ENCODE measurements at regions of chr15 and their contacts with region 1.

Region 1: GRCh38 chr15:74732846-74733245 is 7.5 kb upstream of the CYP1A1 start:
- DNase-seq: no peak
- ATAC-seq: no peak
- H3K4me3 ChIP-seq: no peak overlapping the region
- H3K27ac ChIP-seq: no peak overlapping the region
- H3K4me1 ChIP-seq: no peaks in the 10 kb centered on the region
- H3K27me3 ChIP-seq: no peaks in the 10 kb centered on the region
- CTCF ChIP-seq: no peak

Region 2: DNA sequence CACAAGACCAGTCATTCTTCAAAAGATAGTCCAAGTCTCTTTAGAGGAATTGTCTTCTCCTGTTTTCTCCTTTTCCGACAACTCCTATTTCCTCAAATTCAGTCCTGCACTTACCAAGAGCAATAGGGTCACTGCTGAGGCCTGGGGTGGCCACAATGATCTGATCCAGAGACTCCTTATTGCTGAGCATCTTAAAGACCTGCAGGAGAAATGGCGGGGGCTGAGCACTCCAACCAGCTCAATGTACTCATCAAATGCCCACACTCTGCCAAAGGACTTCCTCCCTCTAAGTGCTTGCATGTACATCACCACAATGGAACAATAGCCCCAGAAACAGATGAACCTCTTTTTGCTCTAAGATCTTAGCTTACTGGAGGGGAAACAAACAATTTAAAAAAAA is 281.5 kb before region 1 on chr15:
- CTCF ChIA-PET with region 1: no interaction called
- POLR2A ChIA-PET with region 1: interaction called, 11 read pairs
- in situ Hi-C with region 1: no loop called
- intact Hi-C with region 1: no loop called
- DNase-seq: no peak
- ATAC-seq: no peak
- H3K4me3 ChIP-seq: no peak overlapping the region
- H3K27ac ChIP-seq: no peak overlapping the region
- H3K4me1 ChIP-seq: no peaks in the 10 kb centered on the region
- H3K27me3 ChIP-seq: no peaks in the 10 kb centered on the region
- CTCF ChIP-seq: no peak